Activated CD4-positive, alpha-beta T cell treated with anti-CD3 and anti-CD28 coated beads for 36 hours (primary cell): ENCODE measurements at regions of chr3 and their contacts with region 1.

Region 1: GRCh38 chr3:57597122-57597923 is at the start of gene ARF4:
- DNase-seq: peak; percentile 99
- ATAC-seq: peak; percentile 94
- H3K4me3 Mint-ChIP-seq: peak within 1 kb of the TSS; percentile 98
- H3K27ac Mint-ChIP-seq: peak within 1 kb of the TSS; percentile 99
- H3K4me1 Mint-ChIP-seq: peaks cover 30% of the 10 kb centered on the region
- H3K27me3 Mint-ChIP-seq: no peaks in the 10 kb centered on the region
- total RNA-seq, gene ARF4: 49.6 to 50.0 TPM

Region 2: GRCh38 chr3:56758539-56758981 is 838.8 kb before region 1 on chr3:
- CTCF ChIA-PET with region 1: no interaction called
- POLR2A ChIA-PET with region 1: no interaction called
- intact Hi-C with region 1: loop called in 1 of 2 experiments (anchors 10 kb)
- DNase-seq: peak; percentile 66
- ATAC-seq: peak; percentile 83
- H3K4me3 Mint-ChIP-seq: peak overlapping the region; percentile 63
- H3K27ac Mint-ChIP-seq: peak overlapping the region; percentile 83
- H3K4me1 Mint-ChIP-seq: peaks cover 82% of the 10 kb centered on the region
- H3K27me3 Mint-ChIP-seq: no peaks in the 10 kb centered on the region

Region 3: GRCh38 chr3:56878074-56878473 is 719.2 kb before region 1 on chr3:
- CTCF ChIA-PET with region 1: no interaction called
- POLR2A ChIA-PET with region 1: no interaction called
- intact Hi-C with region 1: loop called in 1 of 2 experiments (anchors 10 kb)
- DNase-seq: peak; percentile 79
- ATAC-seq: peak; percentile 87
- H3K4me3 Mint-ChIP-seq: peak overlapping the region; percentile 64
- H3K27ac Mint-ChIP-seq: peak overlapping the region; percentile 94
- H3K4me1 Mint-ChIP-seq: peaks cover 90% of the 10 kb centered on the region
- H3K27me3 Mint-ChIP-seq: no peaks in the 10 kb centered on the region

Region 4: DNA sequence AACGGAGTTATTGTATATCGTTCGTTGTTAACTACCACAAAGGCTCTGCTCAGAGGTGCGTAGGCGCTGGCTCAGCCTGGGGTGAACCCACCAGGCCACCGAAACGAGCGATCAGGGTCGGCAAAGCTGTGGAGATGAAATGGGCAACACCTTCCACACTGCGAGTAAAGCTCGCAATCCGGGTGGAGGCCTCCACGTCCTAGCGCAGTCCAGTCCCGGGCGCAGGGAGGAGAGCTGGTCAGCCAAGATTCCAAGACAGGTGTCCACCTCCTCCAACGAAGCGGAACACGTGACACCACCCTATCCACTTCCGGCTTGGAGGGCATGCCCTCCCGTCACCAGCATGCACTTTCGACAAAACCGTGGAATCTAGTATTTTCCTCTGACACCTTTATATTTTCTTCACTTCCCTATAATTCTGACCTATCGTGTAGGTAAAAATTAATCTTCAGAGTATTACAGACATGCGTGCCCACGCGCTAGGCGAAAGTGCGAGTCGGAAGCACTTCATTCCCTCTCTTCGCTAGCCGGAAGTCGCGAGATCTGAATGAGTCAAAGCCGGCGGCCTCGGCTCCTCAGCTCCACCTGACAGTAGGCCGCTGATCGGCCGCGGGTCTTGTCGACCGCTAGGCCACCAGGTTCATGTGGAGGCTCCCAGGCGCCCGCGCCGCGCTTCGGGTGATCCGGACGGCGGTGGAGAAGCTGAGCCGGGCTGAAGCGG is 41.4 kb before region 1 on chr3 and contains the start of gene PDE12:
- CTCF ChIA-PET with region 1: interaction called, 4 read pairs
- POLR2A ChIA-PET with region 1: interaction called, 30 read pairs
- intact Hi-C with region 1: loop called (anchors 1 kb)
- DNase-seq: peak; percentile 91
- ATAC-seq: peak; percentile 82
- H3K4me3 Mint-ChIP-seq: peak within 1 kb of the TSS; percentile 91
- H3K27ac Mint-ChIP-seq: peak within 1 kb of the TSS; percentile 100
- H3K4me1 Mint-ChIP-seq: peaks cover 29% of the 10 kb centered on the region
- H3K27me3 Mint-ChIP-seq: no peaks in the 10 kb centered on the region
- total RNA-seq, gene PDE12: 19.2 to 19.9 TPM

Region 5: GRCh38 chr3:57692259-57693147 is 95.2 kb after region 1 on chr3 and contains the start of gene DENND6A:
- CTCF ChIA-PET with region 1: interaction called, 3 read pairs
- POLR2A ChIA-PET with region 1: interaction called, 4 read pairs
- intact Hi-C with region 1: loop called (anchors 1 kb)
- DNase-seq: peak; percentile 98
- ATAC-seq: peak; percentile 88
- H3K4me3 Mint-ChIP-seq: peak within 1 kb of the TSS; percentile 87
- H3K27ac Mint-ChIP-seq: peak within 1 kb of the TSS; percentile 85
- H3K4me1 Mint-ChIP-seq: peaks cover 31% of the 10 kb centered on the region
- H3K27me3 Mint-ChIP-seq: no peaks in the 10 kb centered on the region
- total RNA-seq, gene DENND6A: 15.0 to 17.1 TPM